ENCODE measurements at regions of chr1 and their contacts with region 1.

Region 1: DNA sequence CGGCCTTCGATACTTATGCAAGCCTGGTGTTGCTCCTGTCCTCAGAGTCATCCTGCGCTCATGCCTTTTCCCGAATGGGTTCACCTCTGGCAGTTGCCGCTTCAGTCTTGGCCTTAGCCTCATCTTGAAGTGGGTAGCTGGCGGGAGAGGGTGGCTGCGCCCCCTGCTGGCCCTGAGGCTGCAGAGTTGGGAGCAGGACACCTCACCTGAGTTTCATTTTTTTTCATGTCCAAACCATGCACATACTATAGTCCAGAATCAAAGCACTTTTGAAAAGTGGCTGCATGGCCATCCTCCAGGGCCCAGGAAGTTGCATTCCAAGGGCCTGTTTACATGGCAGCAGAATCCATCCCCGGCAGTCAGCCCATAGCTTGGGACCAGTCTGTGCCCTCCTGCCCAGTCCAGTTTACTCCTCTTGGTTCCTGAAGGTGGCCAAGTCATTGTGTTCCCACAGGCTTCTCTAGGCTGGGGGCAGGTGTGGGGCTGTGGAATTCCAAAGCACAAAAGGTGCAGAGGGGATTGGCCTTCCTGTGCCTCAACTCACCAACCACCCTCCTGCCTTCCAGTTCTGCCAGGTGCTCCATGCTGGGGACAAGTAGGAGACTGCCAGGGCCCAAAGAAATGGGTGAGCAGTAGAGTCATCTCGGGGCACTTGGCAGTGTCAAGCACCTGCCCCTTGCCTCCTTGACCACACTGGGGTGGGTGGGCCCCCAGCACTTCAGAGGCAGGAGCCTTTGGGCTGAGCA is 44.0 kb downstream of the YARS1 start:
- DNase-seq: peak; percentile 83
- H3K4me3 Mint-ChIP-seq: no peak overlapping the region
- H3K27ac Mint-ChIP-seq: peak overlapping the region; percentile 39
- H3K4me1 Mint-ChIP-seq: peaks cover 10% of the 10 kb centered on the region
- H3K27me3 Mint-ChIP-seq: no peaks in the 10 kb centered on the region

Region 2: GRCh38 chr1:32684167-32684811 is 88.9 kb before region 1 on chr1:
- CTCF ChIA-PET with region 1: interaction called, 10 read pairs
- POLR2A ChIA-PET with region 1: no interaction called
- intact Hi-C with region 1: no loop called
- DNase-seq: no peak
- H3K4me3 Mint-ChIP-seq: no peak overlapping the region
- H3K27ac Mint-ChIP-seq: peak overlapping the region; percentile 61
- H3K4me1 Mint-ChIP-seq: peaks cover 14% of the 10 kb centered on the region
- H3K27me3 Mint-ChIP-seq: no peaks in the 10 kb centered on the region

Region 3: DNA sequence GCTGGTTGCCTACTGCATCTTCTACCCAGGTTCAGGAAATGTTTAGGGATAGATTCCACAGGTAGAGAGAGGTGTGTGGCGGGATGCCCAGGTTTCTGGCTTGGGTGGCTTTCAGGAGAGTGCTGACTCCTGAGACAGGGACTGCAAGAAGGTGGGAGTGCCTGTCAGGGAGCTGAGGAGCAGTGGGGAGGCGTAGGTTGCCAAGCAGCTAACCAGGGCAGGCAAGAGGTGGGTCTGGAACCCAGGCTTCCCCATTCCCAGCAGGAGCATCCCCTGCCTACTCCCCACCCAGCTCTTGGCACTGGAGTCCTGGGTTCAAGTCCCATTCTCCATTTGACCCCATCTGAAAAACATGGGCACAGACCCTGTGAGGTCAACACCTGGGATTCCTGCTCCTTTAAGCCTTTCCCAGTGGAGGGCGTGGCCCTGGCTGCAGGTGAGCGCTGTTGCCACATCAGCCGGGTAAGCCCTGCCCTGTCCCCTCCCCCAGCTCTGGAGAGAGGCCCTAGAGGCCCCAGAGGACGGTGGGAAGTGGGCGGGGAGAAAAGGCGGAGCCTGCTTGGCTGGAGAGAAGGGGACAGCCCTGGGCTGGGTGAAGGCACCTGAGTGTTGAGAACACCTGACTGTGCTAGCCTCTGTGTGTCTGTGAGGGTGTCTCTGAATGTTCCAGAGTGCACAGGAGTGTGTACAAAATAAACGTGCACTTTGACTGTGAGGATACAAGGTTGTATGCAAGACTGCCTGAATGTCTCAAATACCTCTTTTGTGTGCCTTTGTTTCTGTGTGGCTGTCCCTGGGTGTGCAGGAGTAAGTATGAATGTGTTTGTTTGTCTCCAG is 56.7 kb before region 1 on chr1:
- CTCF ChIA-PET with region 1: interaction called, 221 read pairs
- POLR2A ChIA-PET with region 1: interaction called, 11 read pairs
- intact Hi-C with region 1: loop called (anchors 1 kb)
- DNase-seq: peak; percentile 85
- H3K4me3 Mint-ChIP-seq: no peak overlapping the region
- H3K27ac Mint-ChIP-seq: no peak overlapping the region
- H3K4me1 Mint-ChIP-seq: peaks cover 13% of the 10 kb centered on the region
- H3K27me3 Mint-ChIP-seq: no peaks in the 10 kb centered on the region

Region 4: GRCh38 chr1:32753532-32754312 is 19.5 kb before region 1 on chr1:
- CTCF ChIA-PET with region 1: interaction called, 10 read pairs
- POLR2A ChIA-PET with region 1: no interaction called
- intact Hi-C with region 1: no loop called
- DNase-seq: peak; percentile 65
- H3K4me3 Mint-ChIP-seq: peak overlapping the region; percentile 47
- H3K27ac Mint-ChIP-seq: no peak overlapping the region
- H3K4me1 Mint-ChIP-seq: peaks cover 6% of the 10 kb centered on the region
- H3K27me3 Mint-ChIP-seq: peaks cover 4% of the 10 kb centered on the region

Region 5: GRCh38 chr1:32786856-32787255 is 13.7 kb after region 1 on chr1:
- CTCF ChIA-PET with region 1: interaction called, 14 read pairs
- POLR2A ChIA-PET with region 1: interaction called, 4 read pairs
- intact Hi-C with region 1: no loop called
- DNase-seq: no peak
- H3K4me3 Mint-ChIP-seq: no peak overlapping the region
- H3K27ac Mint-ChIP-seq: no peak overlapping the region
- H3K4me1 Mint-ChIP-seq: peaks cover 6% of the 10 kb centered on the region
- H3K27me3 Mint-ChIP-seq: no peaks in the 10 kb centered on the region

Region 6: GRCh38 chr1:32981003-32981901 is 208.1 kb after region 1 on chr1:
- CTCF ChIA-PET with region 1: no interaction called
- POLR2A ChIA-PET with region 1: no interaction called
- intact Hi-C with region 1: no loop called
- DNase-seq: peak; percentile 84
- H3K4me3 Mint-ChIP-seq: peak overlapping the region; percentile 53
- H3K27ac Mint-ChIP-seq: peak overlapping the region; percentile 88
- H3K4me1 Mint-ChIP-seq: peaks cover 57% of the 10 kb centered on the region
- H3K27me3 Mint-ChIP-seq: no peaks in the 10 kb centered on the region

Measured in activated CD4-positive, alpha-beta memory T cell treated with anti-CD3 and anti-CD28 coated beads for 36 hours (primary cell).